ENCODE measurements at regions of chr5 and their contacts with region 1.

Region 1: DNA sequence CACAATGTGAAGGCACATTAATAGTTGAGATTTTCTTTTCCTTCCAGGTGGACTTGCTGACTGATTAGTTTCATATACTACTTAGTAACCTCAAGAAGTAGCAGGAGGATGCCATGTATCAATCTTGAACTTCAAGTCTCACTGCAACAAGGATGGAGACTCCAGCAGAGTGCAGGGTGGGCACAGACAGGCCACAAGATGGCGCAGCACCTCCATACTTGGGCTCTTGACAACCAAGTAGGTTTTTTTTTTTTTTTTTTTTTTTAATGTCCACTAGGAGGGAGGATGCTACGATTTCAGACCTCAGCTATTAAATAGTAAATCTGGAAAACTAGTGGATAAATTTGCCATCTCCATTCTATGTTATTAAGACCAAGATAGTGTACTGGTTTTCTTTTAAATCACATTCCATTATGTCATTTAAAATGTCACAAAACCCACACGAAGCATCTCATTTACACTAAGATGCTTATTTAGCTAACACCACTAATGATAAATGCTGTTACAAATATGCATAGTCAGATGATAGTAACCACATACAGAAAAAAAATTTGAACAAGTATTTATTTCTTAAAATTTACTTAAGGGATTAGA is 58.6 kb downstream of the IL6ST start:
- DNase-seq: no peak
- H3K4me3 ChIP-seq: no peak overlapping the region
- H3K27ac ChIP-seq: no peak overlapping the region
- H3K4me1 ChIP-seq: peaks cover 0 to 10% (median 5%) of the 10 kb centered on the region in 4 donors
- H3K27me3 ChIP-seq: no peaks in the 10 kb centered on the region
- CTCF ChIP-seq: peak; percentile 66 to 83 (median 75)
- EP300 ChIP-seq: no peak
- POLR2A ChIP-seq: no peak

Region 2: DNA sequence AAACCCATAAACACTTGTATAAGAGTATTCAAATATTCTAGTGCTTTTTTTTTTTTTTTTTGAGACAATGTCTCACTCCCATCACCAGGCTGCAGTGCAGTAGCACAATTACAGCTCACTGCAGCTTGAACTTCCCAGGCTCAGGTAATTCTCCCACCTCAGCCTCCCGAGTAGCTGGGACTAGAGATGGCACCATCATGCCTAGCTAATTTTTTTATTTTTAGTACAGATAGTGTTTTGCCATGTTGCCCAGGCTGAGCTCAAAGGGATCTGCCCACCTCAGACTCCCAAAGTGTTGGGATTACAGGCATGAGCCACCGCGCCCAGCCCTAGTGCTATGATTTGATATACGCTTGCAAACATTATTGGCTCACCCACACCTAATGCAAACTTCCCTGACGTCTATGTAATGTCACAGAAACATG is 46.8 kb after region 1 on chr5:
- intact Hi-C with region 1: loop called (anchors 10 kb)
- DNase-seq: no peak
- H3K4me3 ChIP-seq: no peak overlapping the region
- H3K27ac ChIP-seq: no peak overlapping the region
- H3K4me1 ChIP-seq: peaks cover 38 to 77% (median 63%) of the 10 kb centered on the region in 4 donors
- H3K27me3 ChIP-seq: no peaks in the 10 kb centered on the region
- CTCF ChIP-seq: peak; percentile 17 to 32 (median 22)
- EP300 ChIP-seq: no peak
- POLR2A ChIP-seq: no peak

Region 3: DNA sequence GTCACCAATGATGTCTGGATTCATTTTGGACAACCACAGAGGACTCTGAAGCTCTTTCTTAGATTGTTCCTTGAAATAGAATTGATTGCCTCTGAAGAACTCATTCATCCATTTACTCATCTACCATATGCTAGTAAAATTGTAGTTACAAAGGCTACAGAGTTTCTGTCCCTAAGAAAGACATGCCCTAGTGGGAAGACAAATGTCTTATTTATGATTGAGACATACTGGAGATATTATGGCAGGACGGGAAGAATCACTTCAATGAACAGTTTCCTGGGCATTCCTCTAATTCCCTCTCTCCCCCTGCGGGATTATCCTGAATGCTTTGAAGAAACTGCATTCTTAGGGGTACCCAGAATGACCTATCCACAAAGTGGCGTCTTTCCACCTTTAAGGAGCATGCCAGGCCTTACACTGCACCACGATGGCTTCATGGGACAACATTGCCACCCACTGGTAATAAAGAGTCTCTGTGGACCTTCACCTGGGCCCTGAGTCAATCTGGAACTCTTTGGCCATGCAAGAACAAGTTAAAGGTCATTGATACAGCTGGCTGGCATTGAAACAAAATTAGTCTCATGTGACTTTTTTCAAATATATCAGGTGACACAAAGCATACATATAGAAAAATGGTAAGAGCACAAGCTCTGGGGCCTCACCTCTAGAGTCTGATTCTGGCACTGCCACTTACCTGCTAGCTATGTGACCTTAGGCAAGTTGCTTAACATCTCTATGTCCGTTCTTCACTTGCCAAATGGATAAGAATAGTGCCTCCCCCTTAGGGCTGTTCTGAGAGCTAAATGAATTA is 264.9 kb after region 1 on chr5:
- intact Hi-C with region 1: loop called (anchors 5 kb)
- DNase-seq: no peak
- H3K4me3 ChIP-seq: no peak overlapping the region
- H3K27ac ChIP-seq: no peak overlapping the region
- H3K4me1 ChIP-seq: peaks cover 0 to 9% (median 3%) of the 10 kb centered on the region in 4 donors
- H3K27me3 ChIP-seq: no peaks in the 10 kb centered on the region
- CTCF ChIP-seq: peak; percentile 70 to 79 (median 76)
- EP300 ChIP-seq: no peak
- POLR2A ChIP-seq: no peak